Natural killer cell (primary cell): ENCODE measurements at regions of chr2 and their contacts with region 1.

Region 1: DNA sequence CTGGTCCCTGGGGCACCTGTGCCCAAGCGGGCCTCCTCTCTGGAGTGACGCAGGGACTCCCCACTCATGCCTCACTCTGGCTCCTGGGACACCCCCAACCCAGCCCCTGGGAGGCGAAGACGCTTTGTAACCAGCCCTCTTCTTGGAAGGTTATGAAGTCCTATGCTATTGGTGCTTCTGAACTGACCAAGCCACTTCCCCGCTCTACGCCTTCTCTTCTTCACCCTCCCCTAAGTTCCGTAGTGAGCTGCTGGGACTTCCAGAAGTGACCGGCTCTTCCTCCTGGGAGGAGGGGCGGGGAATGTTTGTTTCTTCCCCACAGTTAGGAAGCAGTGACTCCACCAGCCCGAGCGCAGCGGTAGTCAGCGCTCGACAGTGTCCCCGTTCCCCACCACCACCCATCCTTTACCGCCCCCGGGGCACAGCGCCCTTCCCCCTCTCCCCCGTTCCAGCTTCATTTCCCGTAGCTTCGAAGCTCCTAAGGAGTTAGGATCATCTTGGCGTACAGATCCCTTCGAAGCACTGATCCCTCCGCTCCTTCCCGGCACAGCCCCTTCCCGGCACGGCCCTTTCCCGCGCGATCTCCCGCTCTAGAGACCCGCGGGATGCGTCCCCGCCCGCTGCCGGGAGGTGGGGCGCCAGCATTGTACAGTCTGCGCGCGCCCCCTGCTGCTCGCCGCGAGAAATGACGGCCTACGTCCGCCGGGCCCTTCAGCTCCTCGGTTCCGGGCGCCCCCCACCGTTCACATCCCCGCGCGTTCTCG is 25.3 kb upstream of the NOTO start:
- DNase-seq: peak; percentile 90 to 93
- ATAC-seq: peak; percentile 91 to 97 (median 92)
- H3K4me3 ChIP-seq: peak overlapping the region; percentile 50
- H3K4me3 Mint-ChIP-seq: peak overlapping the region; percentile 94
- H3K27ac ChIP-seq: no peak overlapping the region
- H3K27ac Mint-ChIP-seq: peak overlapping the region; percentile 31 to 84
- H3K4me1 ChIP-seq: peaks cover 30% of the 10 kb centered on the region
- H3K4me1 Mint-ChIP-seq: peaks cover 7 to 26% of the 10 kb centered on the region in 2 donors
- H3K27me3 ChIP-seq: peaks cover 10% of the 10 kb centered on the region
- H3K27me3 Mint-ChIP-seq: peaks cover 14 to 24% of the 10 kb centered on the region in 2 donors
- CTCF ChIP-seq: peak; percentile 97

Region 2: GRCh38 chr2:72864500-72864899 is 312.6 kb before region 1 on chr2:
- intact Hi-C with region 1: no loop called
- DNase-seq: no peak
- ATAC-seq: no peak
- H3K4me3 ChIP-seq: no peak overlapping the region
- H3K4me3 Mint-ChIP-seq: no peak overlapping the region
- H3K27ac ChIP-seq: no peak overlapping the region
- H3K27ac Mint-ChIP-seq: no peak overlapping the region
- H3K4me1 ChIP-seq: peaks cover 8% of the 10 kb centered on the region
- H3K4me1 Mint-ChIP-seq: peaks cover 8 to 9% of the 10 kb centered on the region in 2 donors
- H3K27me3 ChIP-seq: peaks cover 25% of the 10 kb centered on the region
- H3K27me3 Mint-ChIP-seq: peaks cover 35 to 69% of the 10 kb centered on the region in 2 donors
- CTCF ChIP-seq: no peak

Region 3: DNA sequence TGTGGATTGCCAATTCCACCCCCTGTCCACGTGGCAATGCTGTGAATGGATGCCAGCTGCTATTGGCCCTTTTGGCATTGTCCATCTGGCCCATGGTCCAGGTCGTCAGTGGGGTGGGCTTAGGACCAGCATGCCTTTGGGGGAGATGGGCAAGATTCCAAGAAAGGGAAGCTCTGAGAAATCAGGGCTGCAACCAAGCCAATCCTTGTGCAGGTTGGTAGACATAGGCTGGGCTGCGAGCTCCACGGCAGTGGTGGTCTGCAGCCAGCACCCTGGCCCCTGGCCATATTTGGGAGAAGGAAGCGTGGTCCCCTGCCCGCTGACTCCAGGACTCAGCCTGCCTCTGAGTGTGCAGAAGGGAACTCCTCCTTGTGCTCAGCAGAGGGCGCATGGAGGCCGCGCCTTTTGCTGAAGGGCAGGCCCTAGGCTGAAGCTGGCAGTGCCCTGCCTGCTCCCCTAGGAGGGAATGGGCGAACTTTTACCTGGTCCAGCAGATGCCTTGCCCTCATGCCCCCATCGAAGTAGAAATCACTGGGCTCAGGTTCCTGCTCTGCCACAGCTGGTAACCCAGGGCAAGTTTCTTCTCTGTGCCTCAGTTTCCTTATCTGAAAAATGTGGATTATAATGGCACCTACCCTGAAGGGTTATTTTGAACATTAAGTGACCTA is 284.4 kb before region 1 on chr2:
- intact Hi-C with region 1: loop called (anchors 1 kb)
- DNase-seq: peak; percentile 42 to 76
- ATAC-seq: peak; percentile 67 to 95 (median 90)
- H3K4me3 ChIP-seq: no peak overlapping the region
- H3K4me3 Mint-ChIP-seq: no peak overlapping the region
- H3K27ac ChIP-seq: no peak overlapping the region
- H3K27ac Mint-ChIP-seq: no peak overlapping the region
- H3K4me1 ChIP-seq: peaks cover 9% of the 10 kb centered on the region
- H3K4me1 Mint-ChIP-seq: peaks cover 0 to 9% of the 10 kb centered on the region in 2 donors
- H3K27me3 ChIP-seq: peaks cover 3% of the 10 kb centered on the region
- H3K27me3 Mint-ChIP-seq: peaks cover 23 to 37% of the 10 kb centered on the region in 2 donors
- CTCF ChIP-seq: peak; percentile 63

Region 4: GRCh38 chr2:72993147-72993932 is 183.7 kb before region 1 on chr2:
- intact Hi-C with region 1: loop called (anchors 1 kb)
- DNase-seq: peak; percentile 43 to 79
- ATAC-seq: peak; percentile 67 to 74 (median 68)
- H3K4me3 ChIP-seq: no peak overlapping the region
- H3K4me3 Mint-ChIP-seq: no peak overlapping the region
- H3K27ac ChIP-seq: no peak overlapping the region
- H3K27ac Mint-ChIP-seq: no peak overlapping the region
- H3K4me1 ChIP-seq: no peaks in the 10 kb centered on the region
- H3K4me1 Mint-ChIP-seq: no peaks in the 10 kb centered on the region
- H3K27me3 ChIP-seq: no peaks in the 10 kb centered on the region
- H3K27me3 Mint-ChIP-seq: no peaks in the 10 kb centered on the region
- CTCF ChIP-seq: peak; percentile 84

Region 5: GRCh38 chr2:73071360-73072133 is 105.5 kb before region 1 on chr2 and contains the start of gene SFXN5:
- intact Hi-C with region 1: loop called (anchors 5 kb)
- DNase-seq: peak; percentile 95 to 99
- ATAC-seq: peak; percentile 86 to 94 (median 89)
- H3K4me3 ChIP-seq: peak within 1 kb of the TSS; percentile 98
- H3K4me3 Mint-ChIP-seq: peak within 1 kb of the TSS; percentile 93
- H3K27ac ChIP-seq: peak within 1 kb of the TSS; percentile 95
- H3K27ac Mint-ChIP-seq: peak within 1 kb of the TSS; percentile 91 to 92
- H3K4me1 ChIP-seq: peaks cover 16% of the 10 kb centered on the region
- H3K4me1 Mint-ChIP-seq: peaks cover 38 to 40% of the 10 kb centered on the region in 2 donors
- H3K27me3 ChIP-seq: no peaks in the 10 kb centered on the region
- H3K27me3 Mint-ChIP-seq: no peaks in the 10 kb centered on the region
- CTCF ChIP-seq: no peak
- total RNA-seq, gene SFXN5: 15.3 to 22.3 (median 19.8) TPM

Region 6: GRCh38 chr2:73085691-73086360 is 91.2 kb before region 1 on chr2:
- intact Hi-C with region 1: loop called (anchors 1 kb)
- DNase-seq: peak; percentile 74 to 86
- ATAC-seq: peak; percentile 88 to 100 (median 97)
- H3K4me3 ChIP-seq: no peak overlapping the region
- H3K4me3 Mint-ChIP-seq: no peak overlapping the region
- H3K27ac ChIP-seq: no peak overlapping the region
- H3K27ac Mint-ChIP-seq: no peak overlapping the region
- H3K4me1 ChIP-seq: no peaks in the 10 kb centered on the region
- H3K4me1 Mint-ChIP-seq: peaks cover 0 to 6% of the 10 kb centered on the region in 2 donors
- H3K27me3 ChIP-seq: no peaks in the 10 kb centered on the region
- H3K27me3 Mint-ChIP-seq: peaks cover 0 to 2% of the 10 kb centered on the region in 2 donors
- CTCF ChIP-seq: peak; percentile 83

Region 7: GRCh38 chr2:73112913-73113633 is 64.0 kb before region 1 on chr2 and contains the start of gene RAB11FIP5:
- intact Hi-C with region 1: loop called (anchors 2 kb)
- DNase-seq: peak; percentile 74 to 89
- ATAC-seq: peak; percentile 81 to 89 (median 88)
- H3K4me3 ChIP-seq: peak within 1 kb of the TSS; percentile 77
- H3K4me3 Mint-ChIP-seq: peak within 1 kb of the TSS; percentile 90
- H3K27ac ChIP-seq: peak within 1 kb of the TSS; percentile 31
- H3K27ac Mint-ChIP-seq: peak within 1 kb of the TSS in 1 of 2 donors; percentile 77
- H3K4me1 ChIP-seq: peaks cover 17% of the 10 kb centered on the region
- H3K4me1 Mint-ChIP-seq: peaks cover 6 to 23% of the 10 kb centered on the region in 2 donors
- H3K27me3 ChIP-seq: peaks cover 4% of the 10 kb centered on the region
- H3K27me3 Mint-ChIP-seq: peaks cover 0 to 13% of the 10 kb centered on the region in 2 donors
- CTCF ChIP-seq: no peak
- total RNA-seq, gene RAB11FIP5: 4.9 to 15.9 (median 11.2) TPM